ENCODE measurements at regions of chr22 and their contacts with region 1.

Region 1: GRCh38 chr22:32649515-32650200 is 151.8 kb upstream of the TIMP3 start:
- DNase-seq: peak in 1 of 2 donors; percentile 40
- H3K4me3 ChIP-seq: no peak overlapping the region
- H3K27ac ChIP-seq: peak overlapping the region in 4 of 5 donors; percentile 33 to 64 (median 52)
- H3K4me1 ChIP-seq: peaks cover 0 to 3% (median 2%) of the 10 kb centered on the region in 4 donors
- H3K27me3 ChIP-seq: no peaks in the 10 kb centered on the region
- CTCF ChIP-seq: no peak
- EP300 ChIP-seq: no peak
- POLR2A ChIP-seq: no peak

Region 2: DNA sequence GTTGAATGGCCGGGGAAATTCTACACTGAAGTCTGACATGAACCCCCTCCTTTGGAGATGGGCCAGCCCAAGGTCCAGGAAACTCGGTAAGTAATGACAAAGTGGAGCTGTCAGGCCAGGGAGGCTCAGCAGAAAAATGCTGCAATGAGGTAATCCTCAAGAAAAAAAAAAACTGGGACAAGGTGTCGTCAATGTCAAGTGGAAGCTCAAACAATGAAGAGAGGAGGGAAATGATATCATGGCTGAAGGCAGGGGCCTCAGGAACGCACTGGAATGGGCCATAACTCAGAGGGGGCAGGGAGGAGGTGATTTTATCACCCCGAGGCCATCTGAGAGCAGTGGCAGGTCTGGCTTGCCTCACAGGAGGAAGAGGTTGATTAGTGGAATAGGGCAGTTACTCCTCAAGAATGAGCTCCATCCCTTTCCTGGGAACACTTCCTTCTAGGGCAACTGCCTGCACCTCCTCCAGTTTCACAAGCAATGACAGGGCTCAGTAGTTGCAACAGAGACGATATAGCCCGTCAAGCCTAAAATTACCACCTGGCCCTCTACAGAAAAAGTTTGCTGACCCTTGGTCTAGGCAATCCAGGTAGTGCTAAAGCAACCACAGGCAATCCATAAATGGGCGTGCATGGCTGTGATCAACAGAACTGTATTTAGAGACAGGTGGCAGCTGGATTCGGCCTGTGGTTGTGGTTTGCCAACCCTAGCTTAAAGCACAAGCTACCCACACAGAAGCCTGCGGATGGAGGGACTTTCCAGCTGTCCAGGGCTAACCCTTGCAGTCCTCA is 109.8 kb before region 1 on chr22:
- intact Hi-C with region 1: loop called (anchors 5 kb)
- DNase-seq: peak in 1 of 2 donors; percentile 50
- H3K4me3 ChIP-seq: no peak overlapping the region
- H3K27ac ChIP-seq: no peak overlapping the region
- H3K4me1 ChIP-seq: peaks cover under 1 to 10% (median 4%) of the 10 kb centered on the region in 4 donors
- H3K27me3 ChIP-seq: no peaks in the 10 kb centered on the region
- CTCF ChIP-seq: no peak
- EP300 ChIP-seq: no peak
- POLR2A ChIP-seq: no peak